CD8-positive, alpha-beta T cell (primary cell): ENCODE measurements at regions of chr14 and their contacts with region 1.

Region 1: DNA sequence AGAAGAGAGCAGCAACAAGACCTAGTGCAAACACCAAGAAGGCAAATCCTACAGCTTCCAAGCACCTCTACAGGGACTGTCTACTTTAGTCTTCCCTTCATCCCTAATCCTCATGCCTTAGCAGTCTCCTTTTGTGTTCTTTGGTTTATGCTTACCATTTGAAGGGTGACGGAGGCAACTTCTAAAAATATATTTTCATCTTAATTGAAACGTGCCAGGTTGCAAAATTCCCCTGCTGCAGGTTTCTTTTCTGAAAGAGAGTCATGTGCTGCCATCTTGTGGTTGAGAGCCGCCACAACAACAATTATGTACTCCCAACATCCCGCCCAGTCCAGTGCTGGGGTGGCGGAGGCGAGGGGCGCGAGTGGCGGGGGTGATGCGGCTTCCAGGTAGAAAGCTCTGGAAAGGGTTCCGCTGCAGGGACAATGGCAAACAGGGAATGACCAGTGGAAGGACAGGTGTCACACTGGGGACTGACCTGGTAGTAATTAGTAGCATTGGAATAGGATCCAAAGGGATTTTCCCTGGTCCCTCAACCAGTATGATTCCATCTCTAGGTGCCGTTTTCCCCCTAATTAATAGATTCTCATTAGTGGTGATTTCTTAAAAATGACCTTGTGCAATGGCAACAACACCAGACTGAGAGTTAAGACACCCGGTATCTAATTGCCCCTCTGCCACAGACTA is 80.3 kb upstream of the GNG2 start:
- DNase-seq: peak; percentile 51 to 83 (median 72)
- ATAC-seq: peak; percentile 71
- H3K4me3 ChIP-seq: no peak overlapping the region
- H3K4me3 Mint-ChIP-seq: peak overlapping the region; percentile 15
- H3K27ac ChIP-seq: no peak overlapping the region
- H3K27ac Mint-ChIP-seq: no peak overlapping the region
- H3K4me1 ChIP-seq: peaks cover 4% of the 10 kb centered on the region
- H3K4me1 Mint-ChIP-seq: peaks cover 21% of the 10 kb centered on the region
- H3K27me3 ChIP-seq: no peaks in the 10 kb centered on the region
- H3K27me3 Mint-ChIP-seq: peaks cover 5% of the 10 kb centered on the region
- CTCF ChIP-seq: peak; percentile 92

Region 2: GRCh38 chr14:51104467-51104866 is 675.7 kb before region 1 on chr14:
- CTCF ChIA-PET with region 1: no interaction called
- POLR2A ChIA-PET with region 1: no interaction called
- intact Hi-C with region 1: loop called in 1 of 2 experiments (anchors 10 kb)
- DNase-seq: no peak
- ATAC-seq: no peak
- H3K4me3 ChIP-seq: no peak overlapping the region
- H3K4me3 Mint-ChIP-seq: no peak overlapping the region
- H3K27ac ChIP-seq: no peak overlapping the region
- H3K27ac Mint-ChIP-seq: no peak overlapping the region
- H3K4me1 ChIP-seq: no peaks in the 10 kb centered on the region
- H3K4me1 Mint-ChIP-seq: no peaks in the 10 kb centered on the region
- H3K27me3 ChIP-seq: no peaks in the 10 kb centered on the region
- H3K27me3 Mint-ChIP-seq: peaks cover 16% of the 10 kb centered on the region
- CTCF ChIP-seq: no peak

Region 3: DNA sequence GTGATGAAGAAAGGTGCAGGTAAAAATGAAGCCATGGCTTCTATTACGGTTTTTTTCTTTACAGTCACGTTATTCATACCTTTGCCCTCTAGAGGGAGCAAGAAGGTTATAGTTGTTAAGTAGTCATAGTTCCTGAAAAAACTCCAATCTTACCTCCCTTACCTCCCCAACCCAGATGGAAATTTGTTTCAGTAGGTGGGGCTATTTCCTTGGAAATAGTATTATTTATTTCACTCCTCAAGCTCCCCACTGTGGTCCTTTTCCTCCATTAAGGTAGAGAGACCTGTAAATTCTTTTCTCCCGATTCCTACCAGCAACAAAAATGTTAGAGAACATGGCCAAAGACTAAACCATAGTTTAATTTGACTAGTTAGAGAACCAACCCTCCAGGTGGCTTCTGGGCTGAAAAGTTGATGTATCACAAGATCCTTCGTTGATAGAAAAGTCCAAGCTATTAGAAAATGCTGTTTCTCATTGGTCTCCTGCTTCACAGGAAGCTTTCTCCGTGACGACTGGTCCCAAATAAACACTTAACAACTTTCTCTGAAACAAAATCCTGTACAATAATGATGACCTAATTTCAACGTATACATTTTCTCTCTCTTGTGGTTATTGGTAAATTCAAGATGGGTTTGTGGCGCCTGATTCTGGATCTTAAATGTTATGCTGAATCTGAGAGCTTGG is 496.6 kb before region 1 on chr14:
- CTCF ChIA-PET with region 1: interaction called, 75 read pairs
- POLR2A ChIA-PET with region 1: no interaction called
- intact Hi-C with region 1: loop called (anchors 1 to 2 kb)
- DNase-seq: peak in 2 of 9 experiments; percentile 48 to 64
- ATAC-seq: no peak
- H3K4me3 ChIP-seq: no peak overlapping the region
- H3K4me3 Mint-ChIP-seq: no peak overlapping the region
- H3K27ac ChIP-seq: no peak overlapping the region
- H3K27ac Mint-ChIP-seq: no peak overlapping the region
- H3K4me1 ChIP-seq: no peaks in the 10 kb centered on the region
- H3K4me1 Mint-ChIP-seq: no peaks in the 10 kb centered on the region
- H3K27me3 ChIP-seq: no peaks in the 10 kb centered on the region
- H3K27me3 Mint-ChIP-seq: no peaks in the 10 kb centered on the region
- CTCF ChIP-seq: peak; percentile 75

Region 4: DNA sequence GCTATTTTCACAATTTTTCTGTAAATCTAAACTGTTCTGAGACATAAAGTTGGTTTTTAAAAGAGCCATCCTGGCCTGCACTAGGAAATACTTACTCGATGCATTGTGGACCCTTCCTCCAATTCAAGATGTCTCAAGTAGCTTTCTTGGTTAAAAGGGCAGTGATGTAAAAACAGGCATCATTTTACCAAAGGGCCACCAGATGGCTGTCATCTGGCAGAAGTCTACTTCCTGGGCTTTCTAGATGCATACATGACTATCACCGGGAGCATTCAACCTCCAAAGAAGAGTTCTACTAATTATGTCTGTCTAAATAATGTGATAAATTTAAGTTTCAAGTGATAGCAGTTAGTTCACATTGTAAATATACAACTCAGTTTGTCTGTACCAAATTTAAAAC is 225.2 kb before region 1 on chr14:
- CTCF ChIA-PET with region 1: interaction called, 4 read pairs
- POLR2A ChIA-PET with region 1: no interaction called
- intact Hi-C with region 1: loop called (anchors 1 to 10 kb)
- DNase-seq: peak in 2 of 9 experiments; percentile 15 to 44
- ATAC-seq: no peak
- H3K4me3 ChIP-seq: no peak overlapping the region
- H3K4me3 Mint-ChIP-seq: no peak overlapping the region
- H3K27ac ChIP-seq: no peak overlapping the region
- H3K27ac Mint-ChIP-seq: no peak overlapping the region
- H3K4me1 ChIP-seq: no peaks in the 10 kb centered on the region
- H3K4me1 Mint-ChIP-seq: no peaks in the 10 kb centered on the region
- H3K27me3 ChIP-seq: no peaks in the 10 kb centered on the region
- H3K27me3 Mint-ChIP-seq: peaks cover 7% of the 10 kb centered on the region
- CTCF ChIP-seq: no peak

Region 5: GRCh38 chr14:51744372-51745130 is 35.6 kb before region 1 on chr14:
- CTCF ChIA-PET with region 1: no interaction called
- POLR2A ChIA-PET with region 1: no interaction called
- intact Hi-C with region 1: no loop called
- DNase-seq: no peak
- ATAC-seq: no peak
- H3K4me3 ChIP-seq: no peak overlapping the region
- H3K4me3 Mint-ChIP-seq: no peak overlapping the region
- H3K27ac ChIP-seq: no peak overlapping the region
- H3K27ac Mint-ChIP-seq: no peak overlapping the region
- H3K4me1 ChIP-seq: no peaks in the 10 kb centered on the region
- H3K4me1 Mint-ChIP-seq: no peaks in the 10 kb centered on the region
- H3K27me3 ChIP-seq: no peaks in the 10 kb centered on the region
- H3K27me3 Mint-ChIP-seq: no peaks in the 10 kb centered on the region
- CTCF ChIP-seq: no peak

Region 6: DNA sequence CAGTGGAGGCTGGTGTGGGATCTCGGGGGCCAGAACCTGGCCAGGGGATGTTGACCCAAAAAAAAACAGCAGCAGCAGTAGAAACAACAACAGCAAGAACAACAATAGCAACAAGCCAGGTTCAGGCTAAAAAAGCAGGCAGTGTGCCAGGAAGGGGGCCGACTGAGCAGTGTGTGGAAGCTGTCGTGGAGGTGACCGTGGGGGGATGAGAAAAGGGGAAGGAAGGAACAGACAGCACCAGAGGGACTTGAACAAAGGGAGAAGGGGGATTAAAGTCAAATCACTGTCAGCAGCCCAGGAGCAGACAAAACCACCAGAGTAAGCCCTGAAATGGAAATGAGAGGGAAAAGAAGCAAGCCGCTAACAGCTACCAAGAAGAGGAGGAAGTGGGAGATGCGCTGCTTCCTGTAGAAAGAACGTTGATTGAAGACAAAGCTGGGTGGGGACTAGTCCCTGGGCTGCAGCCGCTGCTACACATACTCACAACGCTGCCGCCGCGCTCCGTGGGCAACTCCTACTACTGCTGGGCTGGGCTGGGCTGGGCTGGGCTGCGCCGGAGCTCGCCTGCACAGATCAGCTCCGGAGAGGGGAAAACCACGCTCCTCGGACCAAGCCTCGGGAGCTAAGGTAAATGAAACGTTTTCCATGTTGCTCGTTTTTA is 80.1 kb after region 1 on chr14 and contains the start of gene GNG2:
- CTCF ChIA-PET with region 1: interaction called, 10 read pairs
- POLR2A ChIA-PET with region 1: no interaction called
- intact Hi-C with region 1: loop called in 1 of 2 experiments (anchors 5 kb)
- DNase-seq: peak; percentile 71 to 94 (median 83)
- ATAC-seq: peak; percentile 95
- H3K4me3 ChIP-seq: peak within 1 kb of the TSS; percentile 86 to 90
- H3K4me3 Mint-ChIP-seq: peak within 1 kb of the TSS; percentile 98
- H3K27ac ChIP-seq: peak within 1 kb of the TSS; percentile 88
- H3K27ac Mint-ChIP-seq: peak within 1 kb of the TSS; percentile 95
- H3K4me1 ChIP-seq: peaks cover 50% of the 10 kb centered on the region
- H3K4me1 Mint-ChIP-seq: peaks cover 66% of the 10 kb centered on the region
- H3K27me3 ChIP-seq: no peaks in the 10 kb centered on the region
- H3K27me3 Mint-ChIP-seq: no peaks in the 10 kb centered on the region
- CTCF ChIP-seq: no peak
- total RNA-seq, gene GNG2: 166 to 169 TPM